Cardiac septum (tissue), 1 donor: ENCODE measurements at regions of chr17 and their contacts with region 1.

Region 1: DNA sequence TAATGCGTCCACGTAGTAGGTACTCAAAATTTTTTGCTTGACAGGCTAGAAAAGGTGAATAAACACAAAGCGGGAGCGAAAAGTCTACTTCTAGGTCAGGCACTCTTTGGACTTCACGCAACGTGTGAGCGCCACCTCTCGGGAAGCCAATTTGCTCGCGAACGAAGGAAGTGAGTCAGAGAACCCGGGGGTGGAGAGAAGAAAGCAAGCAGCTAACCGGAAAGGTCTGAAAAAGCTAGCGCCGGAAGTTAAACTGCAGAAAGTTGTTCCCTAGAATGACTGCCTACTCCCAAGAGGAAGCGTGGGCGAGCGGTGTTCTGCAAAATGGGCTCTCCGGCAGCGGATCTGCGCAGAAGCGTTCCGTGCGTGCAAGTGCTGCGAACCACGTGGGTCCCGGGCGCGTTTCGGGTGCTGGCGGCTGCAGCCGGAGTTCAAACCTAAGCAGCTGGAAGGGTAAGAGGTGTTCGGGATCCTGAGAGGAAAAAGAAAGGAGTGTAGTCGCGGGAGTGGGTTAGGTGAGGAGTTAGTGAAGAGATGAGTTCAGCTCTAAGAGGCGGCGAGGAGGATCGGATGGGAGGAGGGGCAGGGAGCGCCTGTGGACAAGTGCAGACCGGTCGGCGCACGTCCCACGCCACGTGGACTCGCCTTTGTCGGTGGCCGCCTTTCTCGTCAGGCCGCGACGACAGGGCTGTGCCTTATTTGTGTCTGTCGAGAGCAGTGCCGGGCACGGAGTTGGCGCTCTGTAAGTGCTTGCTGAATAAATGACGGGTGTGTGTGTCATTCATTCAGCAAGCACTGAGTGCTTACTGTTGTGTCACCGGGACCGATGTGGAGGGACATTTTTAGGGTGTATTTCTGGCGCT is at the start of gene NME1:
- DNase-seq: peak; percentile 99
- total RNA-seq, gene NME1: 23.2 TPM

Region 2: DNA sequence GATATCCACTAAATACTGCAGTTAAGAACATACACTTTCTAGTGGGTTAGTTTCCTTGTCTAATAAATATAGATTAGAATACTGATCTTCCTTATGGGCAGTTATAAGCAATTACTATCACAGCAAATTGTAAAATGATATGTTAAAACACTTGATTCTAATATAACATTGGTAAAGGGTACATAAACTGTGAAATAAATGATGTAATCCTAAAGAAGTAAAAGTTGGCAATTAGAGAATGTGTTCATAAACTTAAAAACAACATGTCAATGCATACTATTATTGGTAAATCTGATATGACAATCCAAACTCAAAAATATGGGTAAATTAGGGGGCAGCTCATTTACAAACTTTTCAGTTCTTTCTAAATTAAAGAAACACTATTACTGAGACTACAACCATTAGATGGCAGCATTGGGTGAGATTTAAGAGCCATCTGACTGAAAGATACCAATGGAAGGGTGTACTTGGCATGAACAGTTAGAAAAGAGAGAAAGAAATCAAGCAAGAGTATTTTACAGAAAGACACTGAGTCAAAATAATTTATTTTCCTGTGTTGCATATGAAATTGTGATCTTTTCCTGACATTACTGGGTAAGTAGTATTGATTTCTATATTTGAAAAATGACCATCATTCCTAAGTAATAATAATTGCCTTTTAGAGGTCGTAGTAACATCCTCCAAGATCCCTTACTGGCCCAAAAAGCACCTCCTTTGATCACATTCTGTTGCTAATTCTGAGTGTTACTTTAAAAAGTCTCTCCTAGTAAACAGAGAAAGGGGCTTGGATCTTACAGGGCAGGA is 152.4 kb before region 1 on chr17:
- intact Hi-C with region 1: loop called (anchors 2 kb)
- DNase-seq: no peak

Region 3: GRCh38 chr17:51056813-51057510 is 96.5 kb before region 1 on chr17:
- intact Hi-C with region 1: loop called (anchors 2 kb)
- DNase-seq: no peak